GM18951 (cell line): ENCODE measurements at regions of chr7 and their contacts with region 1.

Region 1: DNA sequence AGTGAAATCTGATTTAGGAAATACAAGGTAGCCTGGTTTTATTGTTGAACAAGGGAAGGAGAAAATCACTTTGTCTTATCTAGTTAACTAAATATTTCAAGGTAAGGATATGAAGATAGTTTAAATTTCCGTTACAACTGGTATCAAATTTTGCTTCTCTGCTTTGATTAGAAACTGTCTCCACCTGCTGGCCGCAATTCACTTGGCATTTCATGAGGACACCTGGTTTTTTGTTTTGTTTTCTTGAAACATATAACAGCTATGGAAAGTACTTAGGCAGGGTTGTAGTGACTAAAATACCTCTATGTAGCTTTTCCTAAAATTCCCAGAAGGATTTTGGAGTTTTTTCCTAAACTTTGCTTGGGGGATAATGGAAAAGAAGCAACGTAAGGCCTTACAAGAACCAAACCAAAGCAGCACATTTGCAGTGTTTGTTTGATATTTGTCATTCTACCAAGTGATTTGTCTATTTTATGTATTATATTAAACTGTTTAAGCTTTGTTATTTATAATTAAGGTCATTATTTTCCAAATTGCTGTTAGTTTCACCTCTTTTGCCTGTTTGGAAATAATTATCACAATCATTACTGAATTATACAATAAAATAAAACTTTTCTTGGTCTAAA is 73.6 kb downstream of the AHCYL2 start:
- POLR2A ChIP-seq: no peak

Region 2: GRCh38 chr7:128697302-128697905 is 601.0 kb before region 1 on chr7:
- in situ Hi-C with region 1: no loop called
- POLR2A ChIP-seq: no peak

Region 3: GRCh38 chr7:129136887-129137642 is 161.3 kb before region 1 on chr7:
- in situ Hi-C with region 1: no loop called
- POLR2A ChIP-seq: no peak

Region 4: GRCh38 chr7:129224251-129225205 is 73.9 kb before region 1 on chr7 and contains the start of gene AHCYL2:
- in situ Hi-C with region 1: loop called (anchors 5 kb)
- POLR2A ChIP-seq: peak; percentile 55